Gastrocnemius medialis (tissue), 4 donors: ENCODE measurements at regions of chr3 and their contacts with region 1.

Region 1: DNA sequence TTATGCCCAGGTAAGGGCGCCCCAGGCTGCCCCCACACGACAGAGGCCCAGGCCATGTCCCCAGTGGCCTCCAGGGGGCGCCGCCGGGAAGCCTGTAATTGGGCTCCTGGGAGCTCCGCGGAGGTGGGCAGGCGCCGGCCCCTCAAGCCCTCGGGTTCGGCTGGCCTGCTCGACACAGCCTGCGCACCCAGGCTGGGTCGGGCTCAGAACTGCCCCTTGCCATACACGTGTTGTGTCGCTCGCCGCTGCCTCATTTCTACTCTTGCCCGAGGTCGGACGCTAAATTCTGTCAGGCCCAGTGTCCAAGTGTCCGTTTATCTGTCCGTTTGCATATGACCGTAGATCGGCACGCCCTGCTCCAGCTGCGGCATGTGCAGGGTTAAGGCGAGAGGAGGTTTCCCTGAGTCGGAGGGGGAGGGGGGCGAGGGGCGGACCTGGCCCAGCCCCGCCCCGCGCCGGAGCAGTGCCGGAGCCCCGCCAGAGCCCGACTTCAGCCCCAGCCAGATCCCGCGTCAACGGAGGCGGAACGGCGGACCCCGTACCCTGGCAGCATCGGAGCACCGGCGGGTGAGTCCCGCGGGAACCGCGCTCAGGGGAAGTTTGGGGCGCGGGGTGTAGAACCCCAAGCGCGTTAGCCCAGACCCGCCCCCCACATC is at the start of gene KLHDC8B:
- DNase-seq: peak; percentile 67 to 82
- ATAC-seq: peak; percentile 80 to 83
- H3K4me3 ChIP-seq: peak within 1 kb of the TSS; percentile 59 to 90 (median 82)
- H3K27ac ChIP-seq: peak within 1 kb of the TSS; percentile 81 to 90 (median 88)
- H3K4me1 ChIP-seq: peaks cover 40 to 41% of the 10 kb centered on the region in 2 donors
- H3K27me3 ChIP-seq: no peaks in the 10 kb centered on the region
- CTCF ChIP-seq: peak; percentile 96 to 99 (median 97)
- POLR2A ChIP-seq: peak; percentile 53 to 54
- total RNA-seq, gene KLHDC8B: 15.8 to 35.8 (median 26.0) TPM

Region 2: GRCh38 chr3:48945891-48946549 is 225.2 kb before region 1 on chr3:
- in situ Hi-C with region 1: no loop called
- intact Hi-C with region 1: no loop called
- DNase-seq: no peak
- ATAC-seq: no peak
- H3K4me3 ChIP-seq: no peak overlapping the region
- H3K27ac ChIP-seq: peak overlapping the region; percentile 34 to 62 (median 54)
- H3K4me1 ChIP-seq: peaks cover 48 to 49% of the 10 kb centered on the region in 2 donors
- H3K27me3 ChIP-seq: no peaks in the 10 kb centered on the region
- CTCF ChIP-seq: no peak
- POLR2A ChIP-seq: no peak

Region 3: GRCh38 chr3:49133226-49133951 is 37.9 kb before region 1 on chr3:
- in situ Hi-C with region 1: no loop called
- intact Hi-C with region 1: loop called (anchors 2 kb)
- DNase-seq: peak; percentile 76 to 83
- ATAC-seq: peak; percentile 85 to 87
- H3K4me3 ChIP-seq: peak overlapping the region; percentile 79 to 100 (median 90)
- H3K27ac ChIP-seq: peak overlapping the region; percentile 90 to 96 (median 94)
- H3K4me1 ChIP-seq: peaks cover 19 to 42% of the 10 kb centered on the region in 2 donors
- H3K27me3 ChIP-seq: no peaks in the 10 kb centered on the region
- CTCF ChIP-seq: peak in 1 of 5 experiments; percentile 20
- POLR2A ChIP-seq: no peak

Region 4: DNA sequence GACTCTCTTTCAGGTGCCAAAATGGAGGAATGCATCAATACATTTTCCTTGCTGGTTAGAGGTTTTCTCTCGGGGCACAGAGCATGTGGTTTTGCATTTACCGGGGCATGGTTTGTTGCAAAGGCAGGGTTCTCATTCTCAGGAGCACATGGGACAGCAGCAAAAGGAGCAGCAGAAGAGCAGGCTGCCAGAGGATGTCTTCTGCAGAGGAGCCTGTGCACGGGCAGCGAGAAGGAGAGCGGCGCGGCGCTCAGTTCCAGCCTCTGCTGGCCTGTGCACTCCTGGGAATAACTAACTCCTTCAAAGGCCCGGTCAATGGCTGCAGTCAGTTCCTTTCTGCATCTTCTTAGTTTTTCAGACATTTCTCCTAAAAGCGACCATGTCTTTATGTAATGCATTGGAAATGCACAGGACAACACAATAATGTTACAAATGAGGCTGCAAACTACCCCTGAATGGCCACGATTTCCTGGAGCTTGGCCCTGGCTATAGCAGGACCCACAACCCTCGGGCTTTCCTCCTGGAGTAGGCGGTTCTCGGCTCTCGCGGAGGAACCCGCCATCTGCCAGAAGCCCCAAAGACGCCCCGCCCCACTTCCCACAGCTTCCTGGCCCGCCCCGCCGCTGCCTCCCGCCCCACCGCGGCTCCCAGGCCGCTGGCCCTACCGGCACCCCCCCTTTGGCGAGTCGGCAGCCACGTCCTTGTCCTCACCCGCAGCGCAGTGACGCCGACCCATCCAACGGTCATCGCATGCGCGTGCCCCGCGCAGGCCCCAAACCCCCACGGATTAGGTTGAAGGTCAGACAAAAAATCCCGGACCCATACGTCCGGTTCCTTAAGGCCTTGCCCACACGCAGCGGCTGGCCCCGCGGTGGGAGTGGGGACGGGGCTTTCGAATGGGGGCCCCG is 105.5 kb after region 1 on chr3 and contains the start of gene C3orf62:
- in situ Hi-C with region 1: loop called in 1 of 4 experiments (anchors 10 kb)
- intact Hi-C with region 1: loop called (anchors 1 kb)
- DNase-seq: peak; percentile 74 to 82
- ATAC-seq: peak; percentile 83 to 86
- H3K4me3 ChIP-seq: peak within 1 kb of the TSS; percentile 55 to 83 (median 60)
- H3K27ac ChIP-seq: peak within 1 kb of the TSS; percentile 84 to 94 (median 90)
- H3K4me1 ChIP-seq: peaks cover 16 to 18% of the 10 kb centered on the region in 2 donors
- H3K27me3 ChIP-seq: no peaks in the 10 kb centered on the region
- CTCF ChIP-seq: no peak
- POLR2A ChIP-seq: peak in 1 of 2 donors; percentile 30
- total RNA-seq, gene C3orf62: 0.78 to 1.9 (median 1.3) TPM

Region 5: DNA sequence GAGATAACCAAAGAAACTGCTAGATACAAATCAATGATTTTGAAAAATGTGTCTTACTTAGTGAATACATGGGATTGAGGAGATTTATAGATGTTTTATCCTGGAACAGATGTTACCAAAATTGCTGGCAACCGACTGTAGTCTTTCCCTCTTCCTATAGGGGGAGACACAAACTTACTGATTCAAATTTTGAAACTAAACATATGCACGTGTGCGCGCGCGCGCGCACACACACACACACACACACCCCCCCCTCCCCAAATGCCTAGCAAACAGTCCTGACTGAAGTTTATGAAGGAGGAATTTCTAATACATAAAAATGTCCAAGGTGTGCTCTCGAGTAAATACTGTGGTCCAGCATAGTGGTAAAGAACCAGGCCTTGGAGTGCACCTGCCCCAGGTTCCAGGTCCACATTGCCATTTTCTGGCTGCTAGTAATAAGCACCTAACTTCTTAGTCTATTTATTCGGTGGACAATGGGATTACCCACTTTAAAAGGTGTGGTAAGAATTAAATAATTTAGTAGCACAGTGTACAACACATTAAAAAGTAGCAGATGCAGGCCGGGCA is 124.3 kb after region 1 on chr3:
- in situ Hi-C with region 1: no loop called
- intact Hi-C with region 1: loop called (anchors 2 kb)
- DNase-seq: no peak
- ATAC-seq: no peak
- H3K4me3 ChIP-seq: no peak overlapping the region
- H3K27ac ChIP-seq: peak overlapping the region; percentile 73 to 89 (median 86)
- H3K4me1 ChIP-seq: peaks cover 32 to 36% of the 10 kb centered on the region in 2 donors
- H3K27me3 ChIP-seq: no peaks in the 10 kb centered on the region
- CTCF ChIP-seq: peak; percentile 35 to 59 (median 46)
- POLR2A ChIP-seq: no peak

Region 6: GRCh38 chr3:49929331-49930240 is 758.3 kb after region 1 on chr3 and contains the start of gene MON1A:
- in situ Hi-C with region 1: no loop called
- intact Hi-C with region 1: no loop called
- DNase-seq: peak; percentile 90 to 94
- ATAC-seq: peak; percentile 94 to 95
- H3K4me3 ChIP-seq: peak within 1 kb of the TSS; percentile 60 to 98 (median 80)
- H3K27ac ChIP-seq: peak within 1 kb of the TSS; percentile 86 to 98 (median 93)
- H3K4me1 ChIP-seq: peaks cover 20 to 31% of the 10 kb centered on the region in 2 donors
- H3K27me3 ChIP-seq: no peaks in the 10 kb centered on the region
- CTCF ChIP-seq: peak in 4 of 5 experiments; percentile 32 to 46 (median 38)
- POLR2A ChIP-seq: peak; percentile 81 to 88
- total RNA-seq, gene MON1A: 13.9 to 41.9 (median 23.9) TPM